ENCODE measurements at regions of chr9 and their contacts with region 1.

Region 1: GRCh38 chr9:137029058-137029936 is 1.3 kb upstream of the ABCA2 start:
- DNase-seq: peak in 1 of 2 experiments; percentile 98
- H3K4me3 ChIP-seq: peak overlapping the region in 1 of 4 experiments; percentile 78; a peak in 4 of 8 replicates
- H3K27ac ChIP-seq: no peak overlapping the region
- H3K4me1 ChIP-seq: peaks cover 0 to 11% (median 3%) of the 10 kb centered on the region in 4 experiments; a peak in 5 of 7 replicates
- H3K27me3 ChIP-seq: peaks cover 1 to 27% (median 15%) of the 10 kb centered on the region in 4 experiments; a peak in 6 of 7 replicates
- CTCF ChIP-seq: peak in 2 of 3 experiments; percentile 94 to 98; a peak in 3 of 4 replicates
- EP300 ChIP-seq: no peak
- POLR2A ChIP-seq: no peak
- RAD21 ChIP-seq: peak; percentile 42 to 64

Region 2: GRCh38 chr9:136944519-136945279 is 84.6 kb before region 1 on chr9 and contains the starts of genes C8G and FBXW5:
- CTCF ChIA-PET with region 1: interaction called, 63 read pairs
- POLR2A ChIA-PET with region 1: interaction called, 3 read pairs
- DNase-seq: peak; percentile 78 to 96
- H3K4me3 ChIP-seq: peak within 1 kb of the TSS; percentile 68 to 95 (median 72)
- H3K27ac ChIP-seq: no peak within 1 kb of the TSS; the same call in 1 of the 2 replicates
- H3K4me1 ChIP-seq: peaks cover 0 to 18% (median 11%) of the 10 kb centered on the region in 4 experiments; a peak in 5 of 7 replicates
- H3K27me3 ChIP-seq: no peaks in the 10 kb centered on the region
- CTCF ChIP-seq: peak in 2 of 3 experiments; percentile 89 to 95; a peak in 3 of 4 replicates
- EP300 ChIP-seq: peak in 1 of 2 experiments; percentile 73; a peak in 1 of 3 replicates
- POLR2A ChIP-seq: no peak; a peak in 1 of 3 replicates
- RAD21 ChIP-seq: peak in 1 of 2 experiments; percentile 42; a peak in 3 of 4 replicates
- total RNA-seq, gene C8G: 0.80 TPM in 1 of 2 replicates, not detected in the other
- total RNA-seq, gene FBXW5: 49.0 and 49.5 TPM in 2 replicates

Region 3: GRCh38 chr9:136978073-136978864 is 51.0 kb before region 1 on chr9:
- CTCF ChIA-PET with region 1: interaction called, 41 read pairs
- POLR2A ChIA-PET with region 1: no interaction called
- DNase-seq: peak; percentile 68 to 98
- H3K4me3 ChIP-seq: peak overlapping the region; percentile 43 to 73 (median 52)
- H3K27ac ChIP-seq: no peak overlapping the region
- H3K4me1 ChIP-seq: peaks cover 0 to 12% (median 5%) of the 10 kb centered on the region in 4 experiments; a peak in 5 of 7 replicates
- H3K27me3 ChIP-seq: peaks cover 0 to 5% (median 2%) of the 10 kb centered on the region in 4 experiments; a peak in 2 of 7 replicates
- CTCF ChIP-seq: no peak
- EP300 ChIP-seq: no peak
- POLR2A ChIP-seq: no peak
- RAD21 ChIP-seq: no peak

Region 4: GRCh38 chr9:137000177-137000883 is 29.0 kb before region 1 on chr9:
- CTCF ChIA-PET with region 1: interaction called, 29 read pairs
- POLR2A ChIA-PET with region 1: no interaction called
- DNase-seq: no peak
- H3K4me3 ChIP-seq: no peak overlapping the region
- H3K27ac ChIP-seq: no peak overlapping the region
- H3K4me1 ChIP-seq: peaks cover 0 to 16% (median 8%) of the 10 kb centered on the region in 4 experiments; a peak in 6 of 7 replicates
- H3K27me3 ChIP-seq: no peaks in the 10 kb centered on the region; a peak in 1 of 7 replicates
- CTCF ChIP-seq: no peak
- EP300 ChIP-seq: no peak
- POLR2A ChIP-seq: no peak
- RAD21 ChIP-seq: no peak

Region 5: GRCh38 chr9:137041124-137041523 is 11.8 kb after region 1 on chr9:
- CTCF ChIA-PET with region 1: interaction called, 47 read pairs
- POLR2A ChIA-PET with region 1: interaction called, 5 read pairs
- DNase-seq: no peak
- H3K4me3 ChIP-seq: no peak overlapping the region
- H3K27ac ChIP-seq: no peak overlapping the region
- H3K4me1 ChIP-seq: peaks cover 3 to 6% (median 5%) of the 10 kb centered on the region in 4 experiments; a peak in 4 of 7 replicates
- H3K27me3 ChIP-seq: peaks cover 5 to 15% (median 10%) of the 10 kb centered on the region in 4 experiments; a peak in 6 of 7 replicates
- CTCF ChIP-seq: no peak
- EP300 ChIP-seq: no peak
- POLR2A ChIP-seq: no peak
- RAD21 ChIP-seq: no peak

Region 6: GRCh38 chr9:137055385-137056364 is 26.4 kb after region 1 on chr9:
- CTCF ChIA-PET with region 1: interaction called, 26 read pairs
- POLR2A ChIA-PET with region 1: no interaction called
- DNase-seq: no peak
- H3K4me3 ChIP-seq: no peak overlapping the region
- H3K27ac ChIP-seq: no peak overlapping the region
- H3K4me1 ChIP-seq: peaks cover 0 to 18% (median 11%) of the 10 kb centered on the region in 4 experiments; a peak in 5 of 7 replicates
- H3K27me3 ChIP-seq: peaks cover 10 to 45% (median 36%) of the 10 kb centered on the region in 4 experiments
- CTCF ChIP-seq: no peak
- EP300 ChIP-seq: no peak
- POLR2A ChIP-seq: no peak
- RAD21 ChIP-seq: no peak

Region 7: GRCh38 chr9:137077010-137077747 is 47.9 kb after region 1 on chr9 and contains the start of gene UAP1L1:
- CTCF ChIA-PET with region 1: interaction called, 110 read pairs
- POLR2A ChIA-PET with region 1: interaction called, 6 read pairs
- DNase-seq: peak in 1 of 2 experiments; percentile 78
- H3K4me3 ChIP-seq: peak within 1 kb of the TSS; percentile 33 to 57 (median 42)
- H3K27ac ChIP-seq: no peak within 1 kb of the TSS
- H3K4me1 ChIP-seq: peaks cover 0 to 20% (median 12%) of the 10 kb centered on the region in 4 experiments; a peak in 6 of 7 replicates
- H3K27me3 ChIP-seq: peaks cover 20 to 50% (median 34%) of the 10 kb centered on the region in 4 experiments
- CTCF ChIP-seq: no peak
- EP300 ChIP-seq: no peak
- POLR2A ChIP-seq: no peak
- RAD21 ChIP-seq: no peak
- total RNA-seq, gene UAP1L1: 5.4 and 5.5 TPM in 2 replicates

Measured in H1 (cell line).